ENCODE measurements at regions of chr3 and their contacts with region 1.

Region 1: DNA sequence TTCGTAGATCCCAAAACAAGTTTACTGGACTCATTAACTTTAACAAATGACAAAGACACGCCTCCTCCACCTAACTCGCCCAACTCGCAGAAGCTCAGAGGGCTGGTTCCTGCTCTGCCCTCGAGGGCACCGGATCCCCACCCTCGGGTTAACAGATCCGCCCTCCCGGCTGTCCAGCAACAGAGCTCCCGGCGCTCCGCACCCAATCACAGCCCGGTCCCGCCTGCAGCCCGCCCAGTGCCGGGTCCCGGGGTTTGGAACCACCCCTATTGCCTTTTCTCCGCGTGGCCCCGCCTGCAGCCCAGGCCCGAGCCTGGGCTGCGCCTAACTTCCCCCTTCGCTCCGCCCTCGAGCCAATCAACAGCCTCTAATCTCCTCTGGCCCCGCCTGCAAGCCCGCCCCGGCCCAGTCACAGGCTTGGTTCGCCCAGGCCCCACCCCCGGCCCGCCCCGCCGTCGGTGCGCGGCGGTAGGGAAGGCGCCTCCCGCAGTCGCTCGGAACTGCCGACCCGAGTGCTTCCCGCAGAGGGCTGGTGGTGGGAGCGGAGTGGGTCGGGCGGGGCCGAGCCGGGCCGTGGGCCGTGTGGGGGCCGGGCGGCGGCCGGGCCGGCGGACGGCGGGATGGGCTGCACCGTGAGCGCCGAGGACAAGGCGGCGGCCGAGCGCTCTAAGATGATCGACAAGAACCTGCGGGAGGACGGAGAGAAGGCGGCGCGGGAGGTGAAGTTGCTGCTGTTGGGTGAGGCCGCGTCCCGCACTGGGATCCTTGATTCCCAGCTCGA is at the start of gene GNAI2:
- DNase-seq: peak; percentile 97
- ATAC-seq: peak; percentile 89
- H3K4me3 Mint-ChIP-seq: peak within 1 kb of the TSS; percentile 95
- H3K27ac Mint-ChIP-seq: peak within 1 kb of the TSS; percentile 91
- H3K4me1 Mint-ChIP-seq: peaks cover 54% of the 10 kb centered on the region
- H3K27me3 Mint-ChIP-seq: no peaks in the 10 kb centered on the region
- CTCF ChIP-seq: no peak
- total RNA-seq, gene GNAI2: 281 and 295 TPM in 2 replicates

Region 2: GRCh38 chr3:49377483-49377882 is 858.4 kb before region 1 on chr3:
- CTCF ChIA-PET with region 1: no interaction called
- POLR2A ChIA-PET with region 1: no interaction called
- intact Hi-C with region 1: no loop called
- DNase-seq: no peak
- ATAC-seq: peak; percentile 62
- H3K4me3 Mint-ChIP-seq: peak overlapping the region; percentile 8
- H3K27ac Mint-ChIP-seq: peak overlapping the region; percentile 63
- H3K4me1 Mint-ChIP-seq: peaks cover 48% of the 10 kb centered on the region
- H3K27me3 Mint-ChIP-seq: no peaks in the 10 kb centered on the region
- CTCF ChIP-seq: no peak

Region 3: GRCh38 chr3:50245831-50246516 is 10.1 kb after region 1 on chr3:
- CTCF ChIA-PET with region 1: interaction called, 104 read pairs
- POLR2A ChIA-PET with region 1: interaction called, 66 read pairs
- intact Hi-C with region 1: loop called (anchors 1 kb)
- DNase-seq: peak; percentile 95
- ATAC-seq: peak; percentile 72
- H3K4me3 Mint-ChIP-seq: peak overlapping the region; percentile 75
- H3K27ac Mint-ChIP-seq: peak overlapping the region; percentile 94
- H3K4me1 Mint-ChIP-seq: peaks cover 88% of the 10 kb centered on the region
- H3K27me3 Mint-ChIP-seq: no peaks in the 10 kb centered on the region
- CTCF ChIP-seq: peak; percentile 79

Region 4: GRCh38 chr3:50327943-50328691 is 92.2 kb after region 1 on chr3 and contains the start of gene TUSC2:
- CTCF ChIA-PET with region 1: interaction called, 3 read pairs
- POLR2A ChIA-PET with region 1: no interaction called
- intact Hi-C with region 1: loop called (anchors 2 kb)
- DNase-seq: peak; percentile 91
- ATAC-seq: peak; percentile 96
- H3K4me3 Mint-ChIP-seq: peak within 1 kb of the TSS; percentile 92
- H3K27ac Mint-ChIP-seq: peak within 1 kb of the TSS; percentile 84
- H3K4me1 Mint-ChIP-seq: peaks cover 25% of the 10 kb centered on the region
- H3K27me3 Mint-ChIP-seq: no peaks in the 10 kb centered on the region
- CTCF ChIP-seq: no peak
- total RNA-seq, gene TUSC2: 32.2 and 33.4 TPM in 2 replicates

Region 5: GRCh38 chr3:50840983-50841489 is 605.1 kb after region 1 on chr3:
- CTCF ChIA-PET with region 1: no interaction called
- POLR2A ChIA-PET with region 1: no interaction called
- intact Hi-C with region 1: no loop called
- DNase-seq: no peak
- ATAC-seq: no peak
- H3K4me3 Mint-ChIP-seq: no peak overlapping the region
- H3K27ac Mint-ChIP-seq: no peak overlapping the region
- H3K4me1 Mint-ChIP-seq: no peaks in the 10 kb centered on the region
- H3K27me3 Mint-ChIP-seq: peaks cover 16% of the 10 kb centered on the region
- CTCF ChIP-seq: no peak

Measured in activated B cell treated with CpG ODN at 0.5 μM for 24 hours (primary cell).